SK-N-SH (cell line): ENCODE measurements at regions of chr19 and their contacts with region 1.

Region 1: GRCh38 chr19:46753420-46754155 is 7.3 kb upstream of the STRN4 start:
- DNase-seq: peak; percentile 77
- H3K4me3 ChIP-seq: no peak overlapping the region
- H3K27ac ChIP-seq: no peak overlapping the region
- H3K4me1 ChIP-seq: peaks cover 0 to 2% of the 10 kb centered on the region in 2 experiments; a peak in 1 of 4 replicates
- H3K27me3 ChIP-seq: no peaks in the 10 kb centered on the region
- CTCF ChIP-seq: peak; percentile 61
- EP300 ChIP-seq: no peak
- RAD21 ChIP-seq: peak; percentile 51

Region 2: DNA sequence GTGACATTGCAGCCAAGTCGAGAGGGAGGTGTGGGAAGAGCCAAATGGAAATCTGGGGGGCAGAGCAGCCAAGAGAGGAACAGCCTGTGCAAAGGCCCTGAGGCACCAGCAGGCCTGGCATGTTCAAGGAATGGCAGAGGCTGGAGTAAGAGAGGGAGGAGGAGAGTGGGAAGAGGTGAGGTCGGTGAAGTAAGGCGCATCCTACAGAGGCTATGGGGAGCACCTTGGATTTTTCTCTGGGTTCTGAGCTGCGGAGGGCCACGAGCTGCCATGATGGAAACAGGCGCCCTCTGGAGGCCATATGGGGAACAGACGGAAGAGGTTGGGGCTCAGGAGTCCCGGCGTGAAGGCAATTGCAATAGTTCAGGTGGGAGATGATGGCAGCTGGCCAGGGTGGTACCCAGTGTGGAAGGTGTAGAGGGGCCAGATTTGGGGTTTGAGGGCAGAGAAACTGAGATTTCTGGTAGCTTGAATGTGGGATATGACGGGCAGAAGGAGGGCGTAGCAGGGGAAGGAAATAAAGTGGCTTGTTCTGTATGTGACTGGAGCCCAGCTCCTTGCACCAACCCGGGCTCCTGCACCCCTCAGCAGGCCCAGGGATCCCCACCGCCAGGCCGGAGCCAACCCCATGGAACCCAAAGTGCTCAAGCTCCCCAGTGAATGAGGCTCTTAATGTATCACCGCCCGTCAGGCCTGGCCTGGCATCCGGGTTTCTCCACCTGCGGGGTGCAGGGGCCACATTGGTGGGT is 13.2 kb after region 1 on chr19:
- CTCF ChIA-PET with region 1: interaction called, 27 read pairs
- POLR2A ChIA-PET with region 1: no interaction called
- DNase-seq: peak; percentile 74
- H3K4me3 ChIP-seq: no peak overlapping the region
- H3K27ac ChIP-seq: no peak overlapping the region
- H3K4me1 ChIP-seq: no peaks in the 10 kb centered on the region
- H3K27me3 ChIP-seq: no peaks in the 10 kb centered on the region
- CTCF ChIP-seq: peak; percentile 76
- EP300 ChIP-seq: no peak
- RAD21 ChIP-seq: peak; percentile 33

Region 3: DNA sequence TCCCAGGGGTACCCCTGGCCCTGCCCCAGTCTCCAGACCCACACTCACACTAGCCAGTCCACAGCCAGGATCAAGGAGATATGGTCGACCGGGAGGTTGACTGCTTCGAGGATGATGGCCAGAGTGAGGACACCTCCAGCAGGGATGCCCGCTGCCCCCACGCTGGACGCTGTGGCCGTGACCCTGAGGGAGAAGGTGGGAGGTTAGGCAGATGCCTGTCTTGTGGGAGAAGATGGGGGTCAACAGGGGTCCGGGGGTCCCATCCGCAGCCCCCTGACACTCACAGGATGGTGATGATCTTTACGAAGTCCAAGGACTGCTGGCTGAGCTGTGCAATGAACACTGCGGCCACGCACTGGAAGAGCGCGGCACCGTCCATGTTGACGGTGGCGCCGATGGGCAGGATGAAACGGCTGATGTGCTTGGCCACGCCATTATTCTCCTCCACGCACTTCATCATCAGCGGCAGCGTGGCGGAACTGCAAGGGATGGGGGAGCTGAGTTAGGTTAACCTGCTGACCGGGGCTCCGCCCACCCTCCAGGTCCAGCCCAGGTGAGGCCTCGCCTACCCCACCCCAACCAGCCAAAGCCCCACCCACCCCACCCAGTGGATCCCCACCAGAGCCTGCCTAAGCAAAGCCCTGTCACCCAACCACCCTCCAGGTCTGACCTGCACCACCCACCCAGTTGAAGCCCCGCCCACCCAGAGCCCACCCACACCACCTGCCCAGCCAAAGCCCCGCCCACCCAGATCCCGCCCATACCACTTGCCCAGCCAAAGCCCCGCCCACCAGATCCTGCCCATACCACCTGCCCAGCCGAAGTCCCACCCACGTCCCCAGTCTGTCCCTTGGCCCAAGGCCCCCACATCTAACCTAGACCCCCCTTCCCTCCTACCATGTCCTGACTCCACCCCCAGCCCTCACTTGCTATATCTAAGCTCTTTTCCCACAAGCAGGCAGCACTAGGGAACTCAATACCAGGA is 23.6 kb after region 1 on chr19:
- CTCF ChIA-PET with region 1: interaction called, 19 read pairs
- POLR2A ChIA-PET with region 1: no interaction called
- DNase-seq: peak; percentile 69
- H3K4me3 ChIP-seq: no peak overlapping the region
- H3K27ac ChIP-seq: no peak overlapping the region
- H3K4me1 ChIP-seq: no peaks in the 10 kb centered on the region
- H3K27me3 ChIP-seq: no peaks in the 10 kb centered on the region
- CTCF ChIP-seq: no peak
- EP300 ChIP-seq: no peak
- RAD21 ChIP-seq: no peak

Region 4: GRCh38 chr19:46878613-46879375 is 125.2 kb after region 1 on chr19:
- CTCF ChIA-PET with region 1: no interaction called
- POLR2A ChIA-PET with region 1: no interaction called
- DNase-seq: no peak
- H3K4me3 ChIP-seq: peak overlapping the region in 1 of 2 experiments; percentile 7; a peak in 2 of 4 replicates
- H3K27ac ChIP-seq: peak overlapping the region in 1 of 2 experiments; percentile 91; a peak in 2 of 4 replicates
- H3K4me1 ChIP-seq: peaks cover 0 to 24% of the 10 kb centered on the region in 2 experiments; a peak in 2 of 4 replicates
- H3K27me3 ChIP-seq: no peaks in the 10 kb centered on the region
- CTCF ChIP-seq: no peak
- EP300 ChIP-seq: peak in 1 of 2 experiments; percentile 60; a peak in 1 of 4 replicates
- RAD21 ChIP-seq: no peak